Activated CD8-positive, alpha-beta memory T cell treated with anti-CD3 and anti-CD28 coated beads, Interleukin-2, amount 10 ng/mL, durations not matched to agents 7 days and 5 days (primary cell): ENCODE measurements at regions of chr19 and their contacts with region 1.

Region 1: DNA sequence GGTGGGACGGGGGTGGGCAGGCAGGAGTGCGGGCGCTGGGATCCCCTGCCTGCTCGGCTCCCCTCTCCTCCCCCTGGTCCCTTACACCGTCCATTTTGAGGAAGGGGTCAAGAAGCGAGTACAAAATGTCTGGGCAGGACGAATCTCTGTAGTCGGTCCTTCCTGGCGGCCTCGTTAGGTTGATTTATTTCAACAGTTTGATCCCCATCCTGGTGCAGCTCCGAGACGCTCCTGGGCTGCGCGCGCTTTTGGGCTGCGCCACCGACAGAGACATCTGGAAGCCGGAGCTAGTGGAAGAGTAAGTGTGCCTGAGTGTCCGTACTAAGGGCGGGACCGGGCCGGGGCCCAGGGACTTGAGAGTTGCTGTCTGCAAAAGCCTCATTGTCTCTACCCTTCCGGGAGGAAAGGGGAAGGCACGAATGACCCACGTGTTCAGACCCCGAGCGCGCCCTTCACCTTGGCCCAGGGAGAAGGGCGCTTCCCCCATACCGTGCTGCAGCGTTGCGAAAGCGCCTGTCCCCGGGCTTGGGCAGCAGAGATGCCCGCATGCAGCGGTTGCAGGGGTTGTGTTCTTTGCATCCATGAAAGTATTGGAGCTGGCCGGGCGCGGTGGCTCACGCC is 1.8 kb downstream of the ZNF114 start:
- DNase-seq: peak; percentile 45
- ATAC-seq: peak; percentile 51
- H3K4me3 Mint-ChIP-seq: peak overlapping the region; percentile 72
- H3K27ac Mint-ChIP-seq: no peak overlapping the region
- H3K4me1 Mint-ChIP-seq: peaks cover 11% of the 10 kb centered on the region
- H3K27me3 Mint-ChIP-seq: peaks cover 30% of the 10 kb centered on the region

Region 2: DNA sequence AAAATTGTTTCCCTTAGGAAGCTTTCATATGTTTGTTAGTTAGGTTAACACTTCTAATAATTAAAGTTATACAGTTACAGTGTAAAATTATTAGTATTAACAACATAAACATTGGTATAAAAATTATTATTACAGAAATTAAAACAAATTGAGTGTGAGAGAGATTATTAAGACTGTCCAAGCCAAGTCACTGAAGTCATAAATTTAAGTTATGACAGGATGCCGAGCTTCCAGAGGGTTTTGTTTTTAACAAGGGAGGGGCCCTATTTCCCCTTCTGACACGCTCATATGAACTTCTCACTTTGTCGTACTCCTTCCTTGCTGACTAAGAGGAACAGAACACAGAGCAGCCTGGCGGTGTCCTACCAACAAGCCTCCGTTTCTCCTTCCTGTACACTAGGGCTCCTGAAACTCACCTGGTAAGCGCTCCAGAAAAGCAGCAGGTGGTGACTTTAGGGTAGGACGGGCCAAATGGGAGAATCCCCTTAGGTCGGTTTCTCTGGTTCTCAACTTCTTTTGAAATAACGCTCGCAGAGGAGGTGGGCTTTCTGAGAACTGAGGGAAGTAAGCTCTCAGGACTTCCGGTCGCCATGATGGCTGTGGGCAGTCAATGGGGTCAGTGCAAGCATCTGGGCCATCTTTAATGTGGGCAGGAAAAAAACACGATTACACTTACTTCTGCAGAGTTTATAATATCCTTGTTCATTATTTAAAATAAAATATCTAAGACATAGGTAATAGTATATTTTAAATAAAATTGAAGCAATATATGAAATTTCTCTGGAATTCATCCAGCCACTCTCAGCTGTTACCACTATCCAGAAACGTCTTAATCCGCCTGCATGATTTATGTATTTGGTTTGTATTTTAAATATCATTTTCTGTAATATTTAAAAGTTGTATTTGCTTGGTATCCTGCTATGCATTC is 16.0 kb before region 1 on chr19 and contains the start of gene CARD8:
- CTCF ChIA-PET with region 1: interaction called, 14 read pairs
- DNase-seq: peak; percentile 95
- ATAC-seq: peak; percentile 76
- H3K4me3 Mint-ChIP-seq: peak within 1 kb of the TSS; percentile 97
- H3K27ac Mint-ChIP-seq: peak within 1 kb of the TSS; percentile 100
- H3K4me1 Mint-ChIP-seq: peaks cover 66% of the 10 kb centered on the region
- H3K27me3 Mint-ChIP-seq: no peaks in the 10 kb centered on the region
- total RNA-seq, gene CARD8: 182 to 219 TPM

Region 3: GRCh38 chr19:48290771-48291488 is 19.3 kb after region 1 on chr19:
- CTCF ChIA-PET with region 1: interaction called, 41 read pairs
- DNase-seq: peak; percentile 59
- ATAC-seq: peak; percentile 85
- H3K4me3 Mint-ChIP-seq: peak overlapping the region; percentile 58
- H3K27ac Mint-ChIP-seq: no peak overlapping the region
- H3K4me1 Mint-ChIP-seq: peaks cover 10% of the 10 kb centered on the region
- H3K27me3 Mint-ChIP-seq: peaks cover 6% of the 10 kb centered on the region